Caco-2 (cell line): ENCODE measurements at regions of chr14 and their contacts with region 1.

Region 1: GRCh38 chr14:30621940-30622830 is at the start of gene SCFD1:
- DNase-seq: peak; percentile 94 to 96
- H3K4me3 ChIP-seq: peak within 1 kb of the TSS; percentile 74
- H3K4me3 Mint-ChIP-seq: peak within 1 kb of the TSS; percentile 82
- H3K27ac Mint-ChIP-seq: peak within 1 kb of the TSS; percentile 92
- H3K4me1 ChIP-seq: no peaks in the 10 kb centered on the region
- H3K4me1 Mint-ChIP-seq: peaks cover 13% of the 10 kb centered on the region
- H3K27me3 ChIP-seq: no peaks in the 10 kb centered on the region
- H3K27me3 Mint-ChIP-seq: no peaks in the 10 kb centered on the region
- CTCF ChIP-seq: no peak
- total RNA-seq, gene SCFD1: 78.1 and 89.4 TPM in 2 replicates

Region 2: DNA sequence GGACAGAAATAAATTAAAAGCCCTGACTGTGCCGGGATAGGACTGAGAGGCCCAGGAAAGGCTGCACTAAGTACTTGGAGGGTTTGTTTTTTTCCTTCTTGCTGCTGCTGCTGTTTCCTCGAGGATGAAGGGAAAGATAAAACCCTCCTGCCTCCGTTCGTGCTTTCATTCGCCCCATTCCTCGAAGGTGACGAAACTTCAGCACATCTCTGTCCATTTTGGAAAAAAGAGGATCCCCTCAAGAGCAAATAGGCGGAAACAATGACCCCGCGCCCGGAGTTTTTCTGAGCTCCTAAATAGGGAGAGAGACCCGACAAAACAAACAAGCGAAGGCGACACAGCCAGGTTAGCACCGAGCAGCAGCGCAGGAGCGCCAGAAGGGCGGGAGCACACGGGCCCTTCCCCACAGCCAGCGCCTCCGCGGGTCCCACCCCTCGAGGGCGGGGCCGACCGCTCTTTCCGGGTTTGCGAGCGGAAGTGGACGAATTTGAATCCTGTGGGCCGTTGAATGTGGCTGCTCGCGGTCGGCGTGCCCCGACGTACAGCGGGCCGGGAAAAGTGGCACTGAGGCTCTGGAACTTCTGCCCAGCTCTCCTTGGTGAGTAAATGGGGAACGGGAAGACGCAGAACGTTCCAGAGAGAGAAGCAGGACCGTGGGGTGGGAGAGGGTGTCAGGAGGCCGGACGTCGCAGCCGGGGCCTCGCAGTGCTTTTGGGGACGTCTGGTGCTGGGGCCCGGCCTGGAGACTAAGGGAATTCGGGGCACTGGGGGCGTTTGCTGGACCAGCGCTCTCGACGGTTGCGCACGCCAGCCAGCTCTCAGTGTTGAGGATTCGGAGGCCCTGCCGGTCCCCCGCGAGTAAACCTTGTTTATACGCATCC is 63.3 kb before region 1 on chr14 and contains the start of gene G2E3:
- CTCF ChIA-PET with region 1: no interaction called
- POLR2A ChIA-PET with region 1: no interaction called
- intact Hi-C with region 1: loop called (anchors 1 kb)
- DNase-seq: peak; percentile 86 to 92
- H3K4me3 ChIP-seq: peak within 1 kb of the TSS; percentile 89
- H3K4me3 Mint-ChIP-seq: peak within 1 kb of the TSS; percentile 79
- H3K27ac Mint-ChIP-seq: peak within 1 kb of the TSS; percentile 90
- H3K4me1 ChIP-seq: peaks cover 12% of the 10 kb centered on the region; the same call in 1 of the 2 replicates
- H3K4me1 Mint-ChIP-seq: peaks cover 14% of the 10 kb centered on the region
- H3K27me3 ChIP-seq: no peaks in the 10 kb centered on the region
- H3K27me3 Mint-ChIP-seq: no peaks in the 10 kb centered on the region
- CTCF ChIP-seq: no peak
- total RNA-seq, gene G2E3: 23.0 and 25.1 TPM in 2 replicates

Region 3: GRCh38 chr14:30698463-30698862 is 76.3 kb after region 1 on chr14:
- CTCF ChIA-PET with region 1: no interaction called
- POLR2A ChIA-PET with region 1: no interaction called
- intact Hi-C with region 1: no loop called
- DNase-seq: no peak
- H3K4me3 ChIP-seq: no peak overlapping the region
- H3K4me3 Mint-ChIP-seq: no peak overlapping the region
- H3K27ac Mint-ChIP-seq: no peak overlapping the region
- H3K4me1 ChIP-seq: no peaks in the 10 kb centered on the region
- H3K4me1 Mint-ChIP-seq: no peaks in the 10 kb centered on the region
- H3K27me3 ChIP-seq: no peaks in the 10 kb centered on the region
- H3K27me3 Mint-ChIP-seq: no peaks in the 10 kb centered on the region
- CTCF ChIP-seq: no peak